H1 (cell line): ENCODE measurements at regions of chr2 and their contacts with region 1.

Region 1: GRCh38 chr2:30862054-30862651 is 54.9 kb upstream of the CAPN13 start:
- DNase-seq: peak; percentile 41 to 53
- H3K4me3 ChIP-seq: no peak overlapping the region
- H3K27ac ChIP-seq: no peak overlapping the region
- H3K4me1 ChIP-seq: no peaks in the 10 kb centered on the region
- H3K27me3 ChIP-seq: no peaks in the 10 kb centered on the region
- CTCF ChIP-seq: peak; percentile 61 to 99 (median 70)
- EP300 ChIP-seq: no peak
- POLR2A ChIP-seq: no peak
- RAD21 ChIP-seq: peak; percentile 74 to 78

Region 2: DNA sequence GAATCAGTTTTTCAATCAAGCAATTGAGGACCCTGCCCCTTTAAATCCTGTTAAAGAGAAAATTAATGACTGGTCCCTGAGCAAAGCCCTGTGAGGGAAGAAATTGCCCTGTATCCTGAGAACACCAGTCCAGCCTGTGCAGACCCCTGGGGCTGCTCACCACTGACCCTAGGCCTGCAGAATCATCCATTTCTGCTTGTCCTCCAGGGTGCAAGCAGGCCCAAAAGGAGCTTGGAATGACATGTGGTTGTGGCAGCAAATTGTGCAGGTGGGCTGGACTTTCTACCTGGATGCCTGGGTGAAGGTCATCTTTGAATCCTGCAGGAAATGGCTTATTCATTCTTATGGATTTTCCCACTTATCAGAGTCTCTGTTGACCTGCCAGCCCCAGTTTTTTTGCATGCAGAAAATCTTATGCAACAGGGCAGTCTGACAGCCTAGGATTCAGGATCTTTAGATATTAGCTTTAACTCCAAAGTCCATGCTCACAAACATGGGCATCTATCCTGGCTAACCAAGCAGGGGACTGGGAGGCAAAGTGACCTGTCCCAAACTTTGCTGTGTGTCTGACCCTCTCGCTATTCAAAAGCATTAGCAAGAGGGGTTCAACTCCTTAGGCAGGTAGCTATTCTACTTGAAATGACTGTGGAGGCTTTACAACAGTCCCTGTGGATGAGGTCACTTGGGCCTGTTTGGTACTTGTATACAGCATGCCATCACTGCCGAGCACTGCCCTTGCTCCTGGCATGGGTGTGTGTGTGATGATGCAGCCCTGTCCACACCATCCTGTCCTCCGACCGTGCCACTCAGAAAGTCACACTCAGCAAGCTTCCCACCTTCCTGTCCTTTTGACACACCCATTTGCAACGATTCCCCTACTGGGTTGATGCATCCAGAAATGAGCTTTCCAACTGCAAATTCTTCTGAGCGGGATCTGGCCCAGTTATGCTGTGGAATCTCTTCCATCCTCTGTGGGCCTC is 140.2 kb before region 1 on chr2:
- CTCF ChIA-PET with region 1: interaction called, 167 read pairs
- POLR2A ChIA-PET with region 1: no interaction called
- DNase-seq: peak in 1 of 2 experiments; percentile 19
- H3K4me3 ChIP-seq: no peak overlapping the region
- H3K27ac ChIP-seq: no peak overlapping the region
- H3K4me1 ChIP-seq: no peaks in the 10 kb centered on the region
- H3K27me3 ChIP-seq: no peaks in the 10 kb centered on the region
- CTCF ChIP-seq: no peak
- EP300 ChIP-seq: no peak
- POLR2A ChIP-seq: no peak
- RAD21 ChIP-seq: no peak

Region 3: GRCh38 chr2:30871980-30872789 is 10.0 kb after region 1 on chr2:
- CTCF ChIA-PET with region 1: interaction called, 24 read pairs
- POLR2A ChIA-PET with region 1: no interaction called
- DNase-seq: peak in 1 of 2 experiments; percentile 23
- H3K4me3 ChIP-seq: no peak overlapping the region
- H3K27ac ChIP-seq: no peak overlapping the region
- H3K4me1 ChIP-seq: peaks cover 0 to 9% (median 0%) of the 10 kb centered on the region in 4 experiments; a peak in 2 of 7 replicates
- H3K27me3 ChIP-seq: no peaks in the 10 kb centered on the region; a peak in 1 of 7 replicates
- CTCF ChIP-seq: no peak
- EP300 ChIP-seq: no peak
- POLR2A ChIP-seq: no peak
- RAD21 ChIP-seq: no peak

Region 4: GRCh38 chr2:30894498-30895119 is 32.5 kb after region 1 on chr2:
- CTCF ChIA-PET with region 1: interaction called, 10 read pairs
- POLR2A ChIA-PET with region 1: interaction called, 3 read pairs
- DNase-seq: no peak
- H3K4me3 ChIP-seq: no peak overlapping the region
- H3K27ac ChIP-seq: no peak overlapping the region
- H3K4me1 ChIP-seq: no peaks in the 10 kb centered on the region; a peak in 2 of 7 replicates
- H3K27me3 ChIP-seq: no peaks in the 10 kb centered on the region
- CTCF ChIP-seq: no peak
- EP300 ChIP-seq: no peak
- POLR2A ChIP-seq: no peak
- RAD21 ChIP-seq: no peak

Region 5: DNA sequence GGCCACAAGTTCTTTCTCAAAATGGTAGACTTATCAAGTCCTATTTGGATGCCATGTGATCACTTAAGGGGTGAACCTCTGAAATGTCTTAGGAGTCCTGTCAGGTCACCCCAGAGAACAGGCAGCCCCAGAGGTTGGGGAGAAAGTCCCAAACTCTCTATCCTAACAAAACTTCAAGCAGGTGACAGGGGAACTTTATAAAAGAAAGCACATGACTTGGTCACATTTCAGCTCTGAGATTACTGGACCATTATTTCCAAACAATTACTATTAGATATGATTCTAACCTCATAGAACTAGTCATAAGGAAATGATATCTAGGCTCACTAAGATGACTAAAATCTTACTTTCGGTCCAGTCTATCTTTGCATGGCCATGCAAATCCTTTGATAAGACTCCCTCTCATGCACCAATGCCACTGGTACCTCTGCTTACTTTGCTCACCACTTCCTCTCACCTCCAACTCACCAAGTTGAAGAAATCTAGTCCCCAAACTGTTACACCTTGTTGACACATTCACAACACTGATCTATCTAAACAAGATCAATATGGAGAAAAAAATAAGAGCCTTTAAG is 169.1 kb after region 1 on chr2:
- CTCF ChIA-PET with region 1: interaction called, 54 read pairs
- POLR2A ChIA-PET with region 1: no interaction called
- DNase-seq: no peak
- H3K4me3 ChIP-seq: no peak overlapping the region
- H3K27ac ChIP-seq: no peak overlapping the region
- H3K4me1 ChIP-seq: peaks cover 0 to 6% (median 0%) of the 10 kb centered on the region in 4 experiments; a peak in 2 of 7 replicates
- H3K27me3 ChIP-seq: no peaks in the 10 kb centered on the region
- CTCF ChIP-seq: no peak
- EP300 ChIP-seq: no peak
- POLR2A ChIP-seq: no peak
- RAD21 ChIP-seq: no peak

Region 6: DNA sequence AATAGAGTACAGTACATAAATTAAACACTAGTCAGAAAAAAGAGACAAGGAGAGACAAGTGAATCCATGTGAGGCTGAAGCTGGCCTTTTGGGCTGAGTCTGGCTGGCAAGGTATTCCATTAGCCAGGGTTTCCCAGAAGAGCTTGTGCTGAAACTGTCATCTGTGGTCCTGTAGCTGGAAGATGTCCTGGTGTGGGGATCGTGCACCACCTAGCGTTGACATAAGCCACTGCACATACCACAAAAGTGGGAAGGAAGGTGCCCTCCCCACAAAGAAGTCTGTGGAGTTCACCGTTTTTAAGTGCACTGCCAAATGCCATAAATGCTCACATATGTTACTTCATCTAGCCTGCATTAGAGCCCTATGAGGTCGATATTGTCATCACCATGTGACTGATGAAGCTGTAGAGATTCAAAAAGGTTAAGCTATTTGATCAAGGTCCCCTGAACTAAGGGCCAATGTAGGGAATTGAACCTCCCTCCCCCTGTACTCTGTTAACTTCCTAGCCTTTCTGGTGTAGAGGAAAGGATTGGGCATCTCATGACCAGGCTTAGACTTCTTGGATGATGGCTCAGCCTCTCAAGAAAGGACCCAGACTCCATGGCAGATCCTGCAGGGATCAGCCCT is 308.0 kb after region 1 on chr2:
- CTCF ChIA-PET with region 1: interaction called, 42 read pairs
- POLR2A ChIA-PET with region 1: no interaction called
- DNase-seq: peak; percentile 23 to 72
- H3K4me3 ChIP-seq: no peak overlapping the region
- H3K27ac ChIP-seq: no peak overlapping the region
- H3K4me1 ChIP-seq: no peaks in the 10 kb centered on the region
- H3K27me3 ChIP-seq: no peaks in the 10 kb centered on the region
- CTCF ChIP-seq: peak; percentile 86 to 96 (median 96)
- EP300 ChIP-seq: no peak
- POLR2A ChIP-seq: no peak
- RAD21 ChIP-seq: peak; percentile 97 to 98